CD4-positive, alpha-beta memory T cell (primary cell): ENCODE measurements at regions of chr20 and their contacts with region 1.

Region 1: DNA sequence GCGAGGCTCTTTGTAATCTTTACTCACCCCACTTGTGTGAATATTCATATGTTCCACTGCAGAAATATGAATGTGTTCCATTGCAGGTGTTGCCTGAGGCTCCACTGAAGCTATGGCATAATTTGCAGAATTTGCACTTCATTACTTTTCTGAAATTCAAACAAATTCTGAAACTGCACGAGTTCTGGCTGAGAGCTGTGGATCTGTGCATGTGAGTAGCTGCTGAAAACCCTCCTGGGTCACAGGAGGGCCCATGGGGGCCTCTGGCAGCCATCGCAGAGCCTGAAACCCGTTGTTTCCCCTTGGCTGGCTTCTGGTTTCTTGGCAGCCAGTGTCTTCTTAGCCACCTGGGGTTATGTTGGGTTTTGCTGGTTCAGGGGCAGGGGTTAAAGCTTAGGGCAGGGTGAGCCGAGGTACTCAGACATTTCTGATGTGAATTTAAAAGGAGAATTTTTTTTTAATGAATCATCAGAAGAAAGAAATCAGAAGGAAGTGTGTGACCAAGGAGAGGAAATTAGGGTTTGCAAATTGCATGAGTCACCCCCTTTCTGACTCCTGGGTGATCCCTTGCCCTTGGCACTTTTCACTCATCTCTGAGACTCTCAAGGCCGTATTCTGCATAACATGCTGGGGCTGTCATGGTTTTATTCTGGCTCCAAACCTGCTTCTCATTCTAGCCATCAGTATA is 40.6 kb downstream of the TOX2 start:
- DNase-seq: peak; percentile 35 to 79 (median 47)
- H3K4me3 ChIP-seq: peak overlapping the region in 1 of 2 donors; percentile 1
- H3K4me3 Mint-ChIP-seq: peak overlapping the region; percentile 5 to 78 (median 56)
- H3K27ac ChIP-seq: no peak overlapping the region
- H3K27ac Mint-ChIP-seq: peak overlapping the region in 3 of 7 donors; percentile 18 to 88 (median 55)
- H3K4me1 ChIP-seq: peaks cover 83% of the 10 kb centered on the region
- H3K4me1 Mint-ChIP-seq: peaks cover 65 to 92% (median 82%) of the 10 kb centered on the region in 4 donors
- H3K27me3 ChIP-seq: no peaks in the 10 kb centered on the region
- H3K27me3 Mint-ChIP-seq: peaks cover 5 to 19% of the 10 kb centered on the region in 2 donors

Region 2: DNA sequence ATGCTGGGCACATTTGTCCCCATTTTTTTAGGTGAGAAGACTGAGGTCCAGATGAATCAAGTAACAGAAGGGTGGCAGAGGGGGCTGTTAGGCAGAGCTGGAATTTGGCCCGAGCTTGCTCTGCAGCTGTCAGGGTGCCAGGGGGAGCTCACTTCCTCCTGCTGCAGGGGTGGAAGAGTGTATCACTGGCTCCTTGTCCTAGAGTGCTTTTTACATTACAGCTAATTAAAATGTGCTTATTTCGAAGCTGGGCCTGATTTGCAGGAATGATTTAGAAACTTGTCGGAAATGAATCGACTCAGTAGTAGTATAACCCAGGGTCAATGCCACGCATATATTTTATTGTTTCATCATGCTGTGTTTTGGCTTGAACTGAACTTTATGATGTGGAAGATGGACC is 29.4 kb before region 1 on chr20:
- CTCF ChIA-PET with region 1: interaction called, 10 read pairs
- POLR2A ChIA-PET with region 1: no interaction called
- intact Hi-C with region 1: no loop called
- DNase-seq: no peak
- H3K4me3 ChIP-seq: no peak overlapping the region
- H3K4me3 Mint-ChIP-seq: peak overlapping the region in 6 of 8 donors; percentile 55 to 74 (median 62)
- H3K27ac ChIP-seq: no peak overlapping the region
- H3K27ac Mint-ChIP-seq: peak overlapping the region in 1 of 7 donors; percentile 16
- H3K4me1 ChIP-seq: peaks cover 64% of the 10 kb centered on the region
- H3K4me1 Mint-ChIP-seq: peaks cover 38 to 51% (median 47%) of the 10 kb centered on the region in 4 donors
- H3K27me3 ChIP-seq: no peaks in the 10 kb centered on the region
- H3K27me3 Mint-ChIP-seq: peaks cover 11 to 17% of the 10 kb centered on the region in 2 donors

Region 3: GRCh38 chr20:43942661-43943290 is 12.4 kb before region 1 on chr20:
- CTCF ChIA-PET with region 1: interaction called, 6 read pairs
- POLR2A ChIA-PET with region 1: interaction called, 41 read pairs
- intact Hi-C with region 1: loop called (anchors 1 kb)
- DNase-seq: peak in 4 of 5 donors; percentile 35 to 47 (median 44)
- H3K4me3 ChIP-seq: peak overlapping the region in 1 of 2 donors; percentile 31
- H3K4me3 Mint-ChIP-seq: peak overlapping the region; percentile 37 to 82 (median 62)
- H3K27ac ChIP-seq: no peak overlapping the region
- H3K27ac Mint-ChIP-seq: peak overlapping the region; percentile 77 to 88 (median 82)
- H3K4me1 ChIP-seq: peaks cover 90% of the 10 kb centered on the region
- H3K4me1 Mint-ChIP-seq: peaks cover 43 to 83% (median 61%) of the 10 kb centered on the region in 4 donors
- H3K27me3 ChIP-seq: no peaks in the 10 kb centered on the region
- H3K27me3 Mint-ChIP-seq: peaks cover 0 to 3% of the 10 kb centered on the region in 2 donors

Region 4: DNA sequence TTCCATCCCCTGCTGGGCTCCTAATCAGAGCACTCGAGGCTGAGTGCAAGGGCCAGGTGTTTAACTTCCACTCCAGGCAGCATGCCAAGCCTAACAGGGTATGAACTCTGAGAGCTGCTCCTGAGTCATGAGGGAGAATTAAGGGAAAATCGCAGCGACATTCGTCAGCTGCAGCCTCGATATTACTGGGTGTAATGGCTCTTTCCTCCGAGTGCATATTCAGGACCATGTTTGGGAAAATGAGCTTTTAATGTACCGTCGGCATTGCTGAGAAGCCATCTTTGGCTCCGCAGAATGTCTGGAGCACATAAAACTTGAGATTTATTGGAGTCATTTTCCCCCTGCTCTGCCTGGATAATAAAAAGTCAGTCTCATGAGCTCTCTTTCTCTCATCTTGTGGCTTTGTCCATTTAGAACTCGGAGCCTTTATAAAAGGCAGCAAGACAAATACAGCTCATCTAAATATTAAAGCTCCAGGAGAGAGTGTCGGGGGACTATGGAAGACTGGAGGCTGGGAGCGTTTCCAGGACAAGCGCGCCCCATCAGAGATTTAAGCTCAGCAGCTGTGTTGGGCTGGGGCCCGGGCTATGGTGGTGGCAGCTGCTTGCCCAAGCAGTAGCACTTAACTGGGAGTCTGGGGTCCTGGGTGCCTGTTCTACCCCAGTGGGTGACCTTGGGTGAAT is 63.2 kb after region 1 on chr20:
- CTCF ChIA-PET with region 1: no interaction called
- POLR2A ChIA-PET with region 1: no interaction called
- intact Hi-C with region 1: loop called (anchors 10 kb)
- DNase-seq: no peak
- H3K4me3 ChIP-seq: no peak overlapping the region
- H3K4me3 Mint-ChIP-seq: peak overlapping the region in 3 of 8 donors; percentile 5 to 67 (median 12)
- H3K27ac ChIP-seq: no peak overlapping the region
- H3K27ac Mint-ChIP-seq: no peak overlapping the region
- H3K4me1 ChIP-seq: peaks cover 40% of the 10 kb centered on the region
- H3K4me1 Mint-ChIP-seq: peaks cover 24 to 50% (median 32%) of the 10 kb centered on the region in 4 donors
- H3K27me3 ChIP-seq: no peaks in the 10 kb centered on the region
- H3K27me3 Mint-ChIP-seq: peaks cover 2 to 17% of the 10 kb centered on the region in 2 donors

Region 5: DNA sequence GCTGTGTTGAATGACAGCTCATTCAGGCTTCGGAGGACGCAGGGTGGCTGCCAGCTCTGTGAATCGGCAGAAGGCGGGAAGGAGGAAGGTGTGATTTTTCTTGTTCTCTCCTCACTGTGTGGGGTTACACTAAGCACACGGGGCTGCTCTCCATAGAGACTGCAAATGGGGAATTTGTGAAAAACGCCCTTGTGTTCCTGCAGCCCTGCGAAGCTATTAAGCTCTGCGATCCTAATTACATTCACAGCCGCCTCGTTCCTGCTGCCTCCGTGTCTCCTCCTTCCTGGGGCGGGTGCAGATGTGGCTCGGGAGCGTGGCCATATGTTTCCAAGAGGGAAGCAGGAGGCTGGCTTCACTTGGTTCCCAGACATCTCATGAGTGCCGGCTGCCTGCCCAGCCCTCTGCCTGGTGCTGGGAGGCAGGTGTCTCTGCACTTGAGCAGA is 83.5 kb after region 1 on chr20:
- CTCF ChIA-PET with region 1: no interaction called
- POLR2A ChIA-PET with region 1: no interaction called
- intact Hi-C with region 1: no loop called
- DNase-seq: no peak
- H3K4me3 ChIP-seq: no peak overlapping the region
- H3K4me3 Mint-ChIP-seq: no peak overlapping the region
- H3K27ac ChIP-seq: no peak overlapping the region
- H3K27ac Mint-ChIP-seq: peak overlapping the region in 1 of 7 donors; percentile 30
- H3K4me1 ChIP-seq: peaks cover 15% of the 10 kb centered on the region
- H3K4me1 Mint-ChIP-seq: peaks cover 6 to 9% (median 6%) of the 10 kb centered on the region in 4 donors
- H3K27me3 ChIP-seq: no peaks in the 10 kb centered on the region
- H3K27me3 Mint-ChIP-seq: peaks cover 12 to 17% of the 10 kb centered on the region in 2 donors

Region 6: DNA sequence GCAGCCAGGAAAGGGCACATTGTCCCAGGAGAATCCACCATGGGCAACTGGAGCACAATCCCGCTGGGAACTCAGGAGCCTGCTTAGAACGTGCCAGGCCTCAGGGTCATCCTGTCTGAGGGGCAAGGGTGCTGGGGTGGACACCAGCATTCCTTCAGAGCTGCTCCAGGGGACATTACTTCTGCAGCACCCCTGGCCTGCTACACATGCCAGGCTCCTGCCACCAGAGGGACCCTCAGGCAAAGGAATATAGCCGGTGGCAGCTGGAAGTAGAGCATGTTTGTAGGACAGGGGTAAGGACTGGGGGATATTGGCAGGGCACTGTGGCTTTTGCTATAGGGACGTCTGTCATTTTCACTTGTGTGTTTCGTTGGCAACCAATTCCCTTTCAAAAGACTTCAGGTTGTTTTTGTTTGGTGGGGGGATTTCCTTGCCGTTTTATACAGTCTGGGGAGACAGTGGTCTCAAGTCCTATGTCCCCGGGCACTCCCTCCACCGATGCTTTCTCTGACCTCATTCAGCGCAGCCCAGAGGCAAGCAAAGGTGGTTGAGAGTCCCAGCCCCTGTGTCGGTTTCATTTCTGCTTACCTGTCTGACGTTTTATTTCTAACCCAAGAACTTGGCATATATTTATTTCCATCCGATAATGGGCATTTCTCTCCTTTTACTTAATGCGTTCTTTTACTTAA is 100.9 kb after region 1 on chr20:
- CTCF ChIA-PET with region 1: no interaction called
- POLR2A ChIA-PET with region 1: no interaction called
- intact Hi-C with region 1: no loop called
- DNase-seq: peak; percentile 32 to 57 (median 54)
- H3K4me3 ChIP-seq: no peak overlapping the region
- H3K4me3 Mint-ChIP-seq: no peak overlapping the region
- H3K27ac ChIP-seq: no peak overlapping the region
- H3K27ac Mint-ChIP-seq: no peak overlapping the region
- H3K4me1 ChIP-seq: no peaks in the 10 kb centered on the region
- H3K4me1 Mint-ChIP-seq: peaks cover 0 to 6% (median 4%) of the 10 kb centered on the region in 4 donors
- H3K27me3 ChIP-seq: no peaks in the 10 kb centered on the region
- H3K27me3 Mint-ChIP-seq: peaks cover 0 to 2% of the 10 kb centered on the region in 2 donors

Region 7: GRCh38 chr20:44069203-44070011 is 114.2 kb after region 1 on chr20:
- CTCF ChIA-PET with region 1: no interaction called
- POLR2A ChIA-PET with region 1: interaction called, 3 read pairs
- intact Hi-C with region 1: loop called (anchors 5 kb)
- DNase-seq: peak; percentile 77 to 89 (median 84)
- H3K4me3 ChIP-seq: peak overlapping the region; percentile 40 to 57
- H3K4me3 Mint-ChIP-seq: peak overlapping the region; percentile 83 to 92 (median 88)
- H3K27ac ChIP-seq: peak overlapping the region; percentile 55
- H3K27ac Mint-ChIP-seq: peak overlapping the region; percentile 87 to 99 (median 98)
- H3K4me1 ChIP-seq: peaks cover 57% of the 10 kb centered on the region
- H3K4me1 Mint-ChIP-seq: peaks cover 23 to 68% (median 44%) of the 10 kb centered on the region in 4 donors
- H3K27me3 ChIP-seq: no peaks in the 10 kb centered on the region
- H3K27me3 Mint-ChIP-seq: no peaks in the 10 kb centered on the region